ENCODE measurements at regions of chr6 and their contacts with region 1.

Region 1: GRCh38 chr6:85482905-85483700 is 33.2 kb downstream of the NT5E start:
- DNase-seq: no peak
- H3K4me3 ChIP-seq: no peak overlapping the region
- H3K27ac ChIP-seq: no peak overlapping the region
- H3K27me3 ChIP-seq: no peaks in the 10 kb centered on the region
- CTCF ChIP-seq: peak; percentile 100

Region 2: DNA sequence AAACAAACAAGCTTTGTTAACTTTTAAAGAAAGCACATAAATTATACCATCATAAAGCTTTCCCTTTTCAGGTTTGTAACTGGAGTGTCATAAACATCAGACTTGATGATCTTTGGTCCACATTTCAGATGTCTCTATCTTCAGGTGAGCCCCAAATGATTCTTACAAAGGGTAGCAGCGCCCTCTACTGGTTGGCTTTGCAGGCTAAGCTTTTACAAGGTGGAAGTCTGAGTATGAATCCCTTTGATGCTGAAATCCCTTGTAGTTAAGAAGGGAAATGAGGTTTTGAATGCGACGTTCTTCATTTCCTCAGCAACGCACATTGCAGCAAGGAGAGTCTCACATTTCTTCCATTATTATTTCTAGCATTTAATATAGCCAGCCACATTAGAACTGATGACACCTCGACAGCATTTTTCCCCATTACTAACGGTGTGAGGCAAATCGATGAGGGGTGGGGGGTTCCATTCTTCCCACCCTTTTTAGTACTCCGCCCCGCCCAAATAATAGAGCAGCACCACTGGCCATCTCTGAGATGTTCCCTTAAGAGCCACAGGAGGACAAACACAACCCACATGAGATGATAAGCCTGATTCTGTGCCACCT is 159.6 kb before region 1 on chr6:
- CTCF ChIA-PET with region 1: interaction called, 34 read pairs
- POLR2A ChIA-PET with region 1: no interaction called
- DNase-seq: peak; percentile 46
- H3K4me3 ChIP-seq: no peak overlapping the region
- H3K27ac ChIP-seq: no peak overlapping the region
- H3K27me3 ChIP-seq: peaks cover 11% of the 10 kb centered on the region
- CTCF ChIP-seq: peak; percentile 92

Region 3: GRCh38 chr6:85360794-85361642 is 122.1 kb before region 1 on chr6:
- CTCF ChIA-PET with region 1: interaction called, 412 read pairs
- POLR2A ChIA-PET with region 1: interaction called, 5 read pairs
- DNase-seq: peak; percentile 90
- H3K4me3 ChIP-seq: no peak overlapping the region
- H3K27ac ChIP-seq: peak overlapping the region; percentile 62
- H3K27me3 ChIP-seq: no peaks in the 10 kb centered on the region
- CTCF ChIP-seq: no peak

Region 4: DNA sequence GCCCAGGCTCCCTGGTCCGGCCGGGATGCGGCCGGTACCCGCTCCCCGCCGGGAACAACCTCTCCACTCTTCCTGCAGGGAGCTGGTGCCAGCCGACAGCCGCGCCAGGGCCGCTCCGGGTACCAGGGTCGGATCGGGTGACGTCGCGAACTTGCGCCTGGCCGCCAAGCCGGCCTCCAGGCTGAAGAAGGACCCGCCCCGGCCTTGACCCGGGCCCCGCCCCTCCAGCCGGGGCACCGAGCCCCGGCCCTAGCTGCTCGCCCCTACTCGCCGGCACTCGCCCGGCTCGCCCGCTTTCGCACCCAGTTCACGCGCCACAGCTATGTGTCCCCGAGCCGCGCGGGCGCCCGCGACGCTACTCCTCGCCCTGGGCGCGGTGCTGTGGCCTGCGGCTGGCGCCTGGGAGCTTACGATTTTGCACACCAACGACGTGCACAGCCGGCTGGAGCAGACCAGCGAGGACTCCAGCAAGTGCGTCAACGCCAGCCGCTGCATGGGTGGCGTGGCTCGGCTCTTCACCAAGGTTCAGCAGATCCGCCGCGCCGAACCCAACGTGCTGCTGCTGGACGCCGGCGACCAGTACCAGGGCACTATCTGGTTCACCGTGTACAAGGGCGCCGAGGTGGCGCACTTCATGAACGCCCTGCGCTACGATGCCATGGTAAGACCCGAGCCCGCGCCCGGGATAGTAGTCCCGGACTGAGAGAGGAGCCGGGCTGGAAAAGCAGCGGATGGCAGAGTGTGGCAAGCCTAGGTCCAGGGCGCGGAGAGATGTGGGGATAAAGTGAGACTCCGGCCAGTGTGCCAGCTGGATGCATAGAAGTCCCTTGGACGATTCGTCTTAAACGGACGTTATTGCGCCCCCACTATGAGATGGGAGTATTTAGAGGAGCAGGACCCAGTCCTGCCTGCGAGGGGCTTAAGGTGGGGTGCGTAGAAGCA is 33.0 kb before region 1 on chr6 and contains the start of gene NT5E:
- CTCF ChIA-PET with region 1: interaction called, 58 read pairs
- POLR2A ChIA-PET with region 1: interaction called, 7 read pairs
- DNase-seq: no peak
- H3K4me3 ChIP-seq: peak within 1 kb of the TSS; percentile 87
- H3K27ac ChIP-seq: peak within 1 kb of the TSS; percentile 76
- H3K27me3 ChIP-seq: no peaks in the 10 kb centered on the region
- CTCF ChIP-seq: no peak
- polyA plus RNA-seq, gene NT5E: 127 and 164 TPM in 2 replicates

Region 5: DNA sequence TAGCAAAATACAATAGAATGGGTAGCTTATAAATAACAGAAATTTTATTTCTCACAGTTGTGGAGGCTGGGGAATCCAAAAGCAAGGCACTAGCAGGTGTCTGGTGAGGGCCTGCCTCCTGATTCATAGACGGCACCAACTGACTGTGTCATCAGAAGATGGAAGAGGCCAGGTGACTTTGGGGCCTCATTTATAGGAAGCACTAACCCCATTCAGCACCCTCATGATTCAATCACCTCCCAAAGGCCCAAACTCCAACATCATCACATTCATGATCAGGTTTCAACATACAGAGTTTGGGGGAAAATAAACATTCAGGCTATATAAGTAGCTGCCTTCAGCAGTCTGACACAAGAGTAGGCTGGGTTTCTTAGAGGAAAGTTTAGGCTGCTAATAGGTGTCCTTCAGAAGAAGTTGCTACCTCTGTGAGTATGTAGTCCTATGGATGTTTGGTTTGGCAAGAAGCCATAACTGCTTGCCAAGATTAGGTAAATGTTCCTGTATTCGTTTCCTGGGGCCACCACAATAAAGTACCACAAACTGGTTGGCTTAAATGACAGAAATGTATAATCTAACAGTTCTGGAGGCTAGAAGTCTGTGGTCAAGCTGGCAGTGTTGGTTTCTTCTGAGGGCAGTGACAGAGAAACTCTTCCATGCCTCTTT is 15.6 kb after region 1 on chr6:
- CTCF ChIA-PET with region 1: interaction called, 138 read pairs
- POLR2A ChIA-PET with region 1: interaction called, 3 read pairs
- DNase-seq: no peak
- H3K4me3 ChIP-seq: no peak overlapping the region
- H3K27ac ChIP-seq: no peak overlapping the region
- H3K27me3 ChIP-seq: no peaks in the 10 kb centered on the region
- CTCF ChIP-seq: no peak

Region 6: DNA sequence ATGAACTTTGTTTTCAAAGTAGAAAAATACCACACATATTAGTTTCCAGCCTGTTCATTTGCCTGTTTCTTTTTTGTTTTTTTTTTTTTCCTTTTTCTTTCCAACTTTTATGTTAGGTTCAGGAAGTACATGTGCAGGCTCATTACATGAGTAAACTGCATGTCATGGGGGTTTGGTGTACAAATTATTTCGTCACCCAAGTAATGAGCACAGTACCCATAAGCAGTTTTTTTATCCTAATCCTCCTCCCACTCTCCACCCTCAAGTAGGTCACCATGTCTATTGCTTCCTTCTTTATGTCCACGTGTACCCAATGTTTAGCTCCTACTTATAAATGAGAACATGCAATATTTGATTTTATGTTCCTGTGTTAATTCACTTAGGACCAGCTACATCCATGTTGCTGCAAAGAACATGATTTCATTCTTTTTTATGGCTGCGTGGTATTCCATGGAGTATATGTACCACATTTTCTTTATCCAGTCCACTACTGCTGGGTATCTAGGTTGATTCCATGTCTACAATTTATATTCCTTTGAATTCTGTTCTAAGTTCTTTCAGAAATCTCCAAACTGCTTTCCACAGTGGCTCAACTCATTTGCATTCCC is 78.8 kb after region 1 on chr6:
- CTCF ChIA-PET with region 1: interaction called, 10 read pairs
- POLR2A ChIA-PET with region 1: no interaction called
- DNase-seq: no peak
- H3K4me3 ChIP-seq: no peak overlapping the region
- H3K27ac ChIP-seq: no peak overlapping the region
- H3K27me3 ChIP-seq: no peaks in the 10 kb centered on the region
- CTCF ChIP-seq: no peak

Region 7: GRCh38 chr6:85602100-85602499 is 119.0 kb after region 1 on chr6:
- CTCF ChIA-PET with region 1: no interaction called
- POLR2A ChIA-PET with region 1: no interaction called
- DNase-seq: no peak
- H3K4me3 ChIP-seq: no peak overlapping the region
- H3K27ac ChIP-seq: no peak overlapping the region
- H3K27me3 ChIP-seq: no peaks in the 10 kb centered on the region
- CTCF ChIP-seq: no peak